Panc1 (cell line): ENCODE measurements at regions of chr6 and their contacts with region 1.

Region 1: DNA sequence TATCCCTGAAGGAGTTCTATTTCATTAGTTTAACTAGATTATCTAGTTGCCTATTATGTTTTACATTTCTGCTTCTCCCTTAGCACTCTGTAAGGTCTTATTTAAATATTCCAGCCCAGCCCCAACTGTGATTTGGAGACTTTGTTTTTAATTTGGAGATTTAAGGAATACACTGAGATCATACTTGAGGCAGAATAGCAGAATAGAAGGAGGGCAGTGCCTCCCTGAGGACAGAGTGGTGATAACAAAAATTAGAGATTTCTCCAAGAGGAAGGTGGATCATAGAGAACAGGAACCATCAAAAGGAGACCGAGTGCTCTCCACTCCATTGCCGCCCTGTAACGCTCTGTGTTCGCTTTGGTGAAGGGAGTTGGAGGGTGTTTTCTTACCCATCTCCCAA is 14.8 kb upstream of the CD164 start:
- DNase-seq: no peak
- ATAC-seq: peak; percentile 61
- H3K4me3 ChIP-seq: no peak overlapping the region
- H3K27ac ChIP-seq: no peak overlapping the region
- H3K4me1 ChIP-seq: no peaks in the 10 kb centered on the region
- H3K27me3 ChIP-seq: no peaks in the 10 kb centered on the region
- CTCF ChIP-seq: peak; percentile 58; the same call in 1 of the 2 replicates

Region 2: GRCh38 chr6:109174911-109175310 is 222.1 kb before region 1 on chr6:
- CTCF ChIA-PET with region 1: interaction called, 13 read pairs
- POLR2A ChIA-PET with region 1: no interaction called
- in situ Hi-C with region 1: no loop called
- intact Hi-C with region 1: no loop called
- DNase-seq: no peak
- ATAC-seq: no peak
- H3K4me3 ChIP-seq: no peak overlapping the region
- H3K27ac ChIP-seq: no peak overlapping the region
- H3K4me1 ChIP-seq: no peaks in the 10 kb centered on the region
- H3K27me3 ChIP-seq: no peaks in the 10 kb centered on the region; the same call in 1 of the 2 replicates
- CTCF ChIP-seq: no peak

Region 3: GRCh38 chr6:109411034-109411433 is 14.0 kb after region 1 on chr6:
- CTCF ChIA-PET with region 1: no interaction called
- POLR2A ChIA-PET with region 1: interaction called, 18 read pairs
- in situ Hi-C with region 1: no loop called
- intact Hi-C with region 1: no loop called
- DNase-seq: no peak
- ATAC-seq: no peak
- H3K4me3 ChIP-seq: no peak overlapping the region
- H3K27ac ChIP-seq: no peak overlapping the region
- H3K4me1 ChIP-seq: no peaks in the 10 kb centered on the region
- H3K27me3 ChIP-seq: no peaks in the 10 kb centered on the region; the same call in 1 of the 2 replicates
- CTCF ChIP-seq: no peak